Naive thymus-derived CD4-positive, alpha-beta T cell (primary cell): ENCODE measurements at regions of chr11 and their contacts with region 1.

Region 1: DNA sequence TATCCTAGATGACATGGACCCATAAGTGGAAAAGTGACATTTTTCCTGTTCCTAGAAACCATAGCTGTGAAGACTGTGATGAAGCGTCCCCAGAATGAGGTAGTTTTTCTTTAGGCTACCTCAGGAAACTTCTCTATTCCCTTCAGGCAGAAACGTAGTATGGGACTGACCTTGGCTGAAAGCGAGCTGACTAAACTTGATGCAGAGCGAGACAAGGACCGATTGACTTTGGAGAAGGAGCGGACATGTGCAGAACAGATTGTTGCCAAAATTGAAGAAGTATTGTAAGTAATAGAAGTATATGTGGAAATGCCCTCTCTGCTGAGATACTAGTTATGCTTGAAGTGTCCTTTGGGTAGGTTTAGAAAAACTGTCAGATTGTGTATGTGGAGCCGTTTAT is 64.7 kb upstream of the GRIK4 start:
- DNase-seq: no peak
- ATAC-seq: no peak
- H3K4me3 ChIP-seq: no peak overlapping the region
- H3K4me3 Mint-ChIP-seq: no peak overlapping the region
- H3K27ac ChIP-seq: no peak overlapping the region
- H3K27ac Mint-ChIP-seq: no peak overlapping the region
- H3K4me1 ChIP-seq: no peaks in the 10 kb centered on the region
- H3K4me1 Mint-ChIP-seq: no peaks in the 10 kb centered on the region
- H3K27me3 ChIP-seq: no peaks in the 10 kb centered on the region
- H3K27me3 Mint-ChIP-seq: no peaks in the 10 kb centered on the region

Region 2: DNA sequence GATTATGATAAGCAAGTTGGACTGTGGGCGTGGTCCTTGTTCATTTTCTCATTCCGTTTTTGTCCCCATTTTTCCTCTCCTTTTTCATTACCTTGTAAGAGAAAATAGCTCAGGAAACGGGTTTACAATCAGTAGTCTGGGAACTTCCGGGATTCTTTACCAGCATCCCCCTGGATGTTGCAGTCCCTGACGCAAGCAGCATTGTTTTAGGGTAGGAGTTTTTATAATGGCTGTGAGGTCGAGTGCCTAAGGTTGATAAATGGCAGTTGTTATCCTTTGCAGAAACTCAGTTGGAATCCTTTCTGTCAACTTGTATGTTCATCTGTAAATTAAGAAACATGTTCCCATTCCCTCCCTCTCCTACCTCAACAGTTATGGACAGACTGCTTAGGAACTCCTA is 42.3 kb before region 1 on chr11:
- CTCF ChIA-PET with region 1: no interaction called
- POLR2A ChIA-PET with region 1: no interaction called
- intact Hi-C with region 1: loop called in 1 of 2 experiments (anchors 1 kb)
- DNase-seq: no peak
- ATAC-seq: no peak
- H3K4me3 ChIP-seq: no peak overlapping the region
- H3K4me3 Mint-ChIP-seq: no peak overlapping the region
- H3K27ac ChIP-seq: no peak overlapping the region
- H3K27ac Mint-ChIP-seq: no peak overlapping the region
- H3K4me1 ChIP-seq: no peaks in the 10 kb centered on the region
- H3K4me1 Mint-ChIP-seq: no peaks in the 10 kb centered on the region
- H3K27me3 ChIP-seq: no peaks in the 10 kb centered on the region
- H3K27me3 Mint-ChIP-seq: peaks cover 4 to 36% (median 10%) of the 10 kb centered on the region in 5 donors